Activated T-helper 2 cell treated with anti-CD3 and anti-CD28 coated beads, Interferon-gamma antibody, Interleukin-2, Interleukin-4, amounts not matched to agents 10 μg/mL and 5 μg/mL and 100 μg/mL, durations not matched to agents 14 hours and 24 hours and 36 hours (primary cell): ENCODE measurements at regions of chr14 and their contacts with region 1.

Region 1: DNA sequence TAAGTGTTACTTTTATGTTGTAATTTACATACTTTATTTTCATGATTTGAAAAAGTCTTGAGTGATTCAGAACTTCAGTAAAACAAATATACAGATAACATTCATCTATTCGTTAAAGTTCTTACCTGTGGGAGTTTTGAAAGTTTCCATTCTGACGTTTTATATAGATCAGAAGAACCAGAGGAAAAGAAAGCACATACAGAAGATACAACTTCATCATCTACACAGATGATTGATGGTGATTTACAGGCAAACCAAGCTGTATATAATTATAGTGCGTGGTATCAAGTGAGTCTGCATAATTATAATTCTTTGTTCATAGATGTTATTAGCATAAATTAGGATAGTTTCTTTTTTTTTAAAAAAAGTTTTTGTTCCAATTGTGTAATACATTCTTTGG is 20.0 kb downstream of the FKBP3 start:
- DNase-seq: no peak
- H3K4me3 Mint-ChIP-seq: no peak overlapping the region
- H3K27ac Mint-ChIP-seq: peak overlapping the region; percentile 62
- H3K4me1 Mint-ChIP-seq: peaks cover 21% of the 10 kb centered on the region
- H3K27me3 Mint-ChIP-seq: no peaks in the 10 kb centered on the region

Region 2: GRCh38 chr14:45003924-45004323 is 110.4 kb before region 1 on chr14:
- intact Hi-C with region 1: no loop called
- DNase-seq: no peak
- H3K4me3 Mint-ChIP-seq: no peak overlapping the region
- H3K27ac Mint-ChIP-seq: no peak overlapping the region
- H3K4me1 Mint-ChIP-seq: no peaks in the 10 kb centered on the region
- H3K27me3 Mint-ChIP-seq: no peaks in the 10 kb centered on the region

Region 3: GRCh38 chr14:45083971-45084722 is 30.2 kb before region 1 on chr14 and contains the start of gene PRPF39:
- intact Hi-C with region 1: loop called (anchors 1 kb)
- DNase-seq: peak; percentile 94
- H3K4me3 Mint-ChIP-seq: peak within 1 kb of the TSS; percentile 97
- H3K27ac Mint-ChIP-seq: peak within 1 kb of the TSS; percentile 97
- H3K4me1 Mint-ChIP-seq: peaks cover 46% of the 10 kb centered on the region
- H3K27me3 Mint-ChIP-seq: no peaks in the 10 kb centered on the region
- total RNA-seq, gene PRPF39: 47.6 and 47.8 TPM in 2 replicates

Region 4: GRCh38 chr14:45089813-45090212 is 24.5 kb before region 1 on chr14:
- intact Hi-C with region 1: loop called (anchors 1 kb)
- DNase-seq: no peak
- H3K4me3 Mint-ChIP-seq: no peak overlapping the region
- H3K27ac Mint-ChIP-seq: peak overlapping the region; percentile 64
- H3K4me1 Mint-ChIP-seq: peaks cover 57% of the 10 kb centered on the region
- H3K27me3 Mint-ChIP-seq: no peaks in the 10 kb centered on the region

Region 5: DNA sequence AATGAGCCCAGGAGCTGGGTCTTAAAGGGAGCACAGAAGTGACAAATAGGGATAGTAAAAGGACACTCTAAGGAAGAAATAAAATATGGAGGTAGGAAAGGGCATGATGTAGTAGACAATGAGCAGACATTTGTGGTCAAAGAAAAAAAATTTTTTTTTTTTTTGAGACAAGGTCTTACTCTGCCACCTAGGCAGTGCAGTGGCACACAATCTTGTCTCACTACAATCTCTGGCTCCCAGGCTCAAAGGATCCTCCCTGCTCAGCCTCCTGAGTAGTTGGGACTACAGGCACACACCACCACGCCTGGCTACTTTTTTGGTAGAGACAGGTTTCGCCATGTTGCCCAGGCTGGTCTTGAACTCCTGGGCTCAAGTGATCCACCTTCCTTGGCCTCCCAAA is 11.4 kb after region 1 on chr14:
- intact Hi-C with region 1: no loop called
- DNase-seq: no peak
- H3K4me3 Mint-ChIP-seq: no peak overlapping the region
- H3K27ac Mint-ChIP-seq: no peak overlapping the region
- H3K4me1 Mint-ChIP-seq: peaks cover 4% of the 10 kb centered on the region
- H3K27me3 Mint-ChIP-seq: no peaks in the 10 kb centered on the region

Region 6: DNA sequence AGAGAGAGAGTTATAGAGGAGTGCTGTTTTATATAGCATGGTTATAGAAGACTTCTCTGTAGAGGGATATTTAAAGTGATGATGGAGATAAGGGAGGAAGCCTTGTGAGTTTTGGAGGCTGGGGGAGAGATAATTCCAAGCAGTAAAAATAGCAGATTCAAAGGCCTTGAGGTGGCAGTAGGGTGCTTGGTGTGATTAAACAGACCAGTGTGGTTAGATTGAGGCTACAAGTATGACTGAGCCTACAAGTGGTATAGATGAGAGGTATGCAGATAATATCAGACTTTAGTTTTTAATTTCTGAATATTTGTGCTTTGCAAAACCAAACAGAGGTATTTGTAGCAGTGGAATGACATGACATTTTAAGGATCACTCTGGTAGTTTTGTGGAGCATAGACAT is 41.7 kb after region 1 on chr14:
- intact Hi-C with region 1: loop called (anchors 2 kb)
- DNase-seq: no peak
- H3K4me3 Mint-ChIP-seq: no peak overlapping the region
- H3K27ac Mint-ChIP-seq: no peak overlapping the region
- H3K4me1 Mint-ChIP-seq: peaks cover 11% of the 10 kb centered on the region
- H3K27me3 Mint-ChIP-seq: no peaks in the 10 kb centered on the region

Region 7: GRCh38 chr14:45426670-45427282 is 312.4 kb after region 1 on chr14:
- intact Hi-C with region 1: no loop called
- DNase-seq: no peak
- H3K4me3 Mint-ChIP-seq: no peak overlapping the region
- H3K27ac Mint-ChIP-seq: no peak overlapping the region
- H3K4me1 Mint-ChIP-seq: no peaks in the 10 kb centered on the region
- H3K27me3 Mint-ChIP-seq: no peaks in the 10 kb centered on the region

Region 8: DNA sequence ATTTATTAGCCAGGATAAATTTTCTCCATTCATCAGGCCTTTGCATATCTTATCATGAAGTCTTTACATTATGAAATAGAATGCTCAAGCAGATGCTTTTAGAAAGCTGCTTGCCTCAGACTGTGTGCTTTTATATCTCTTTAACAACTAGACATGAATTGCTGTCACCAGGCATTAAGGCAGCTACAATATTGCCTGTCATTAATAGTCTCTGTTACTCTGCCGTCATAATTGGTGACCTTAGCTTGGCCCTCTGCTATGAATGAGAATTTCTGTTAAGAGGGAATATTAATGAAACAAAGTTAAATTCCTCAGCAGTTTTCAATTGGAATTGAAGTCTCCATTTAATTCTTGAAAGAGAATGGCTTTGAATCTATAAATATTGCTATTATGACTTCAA is 405.4 kb after region 1 on chr14:
- intact Hi-C with region 1: no loop called
- DNase-seq: no peak
- H3K4me3 Mint-ChIP-seq: no peak overlapping the region
- H3K27ac Mint-ChIP-seq: no peak overlapping the region
- H3K4me1 Mint-ChIP-seq: no peaks in the 10 kb centered on the region
- H3K27me3 Mint-ChIP-seq: no peaks in the 10 kb centered on the region